Left ventricle myocardium superior (tissue), 1 donor: ENCODE measurements at regions of chrX and their contacts with region 1.

Region 1: GRCh38 chrX:68828740-68829552 is at the start of gene EFNB1:
- DNase-seq: peak; percentile 94
- ATAC-seq: peak; percentile 92
- total RNA-seq, gene EFNB1: 15.8 TPM

Region 2: DNA sequence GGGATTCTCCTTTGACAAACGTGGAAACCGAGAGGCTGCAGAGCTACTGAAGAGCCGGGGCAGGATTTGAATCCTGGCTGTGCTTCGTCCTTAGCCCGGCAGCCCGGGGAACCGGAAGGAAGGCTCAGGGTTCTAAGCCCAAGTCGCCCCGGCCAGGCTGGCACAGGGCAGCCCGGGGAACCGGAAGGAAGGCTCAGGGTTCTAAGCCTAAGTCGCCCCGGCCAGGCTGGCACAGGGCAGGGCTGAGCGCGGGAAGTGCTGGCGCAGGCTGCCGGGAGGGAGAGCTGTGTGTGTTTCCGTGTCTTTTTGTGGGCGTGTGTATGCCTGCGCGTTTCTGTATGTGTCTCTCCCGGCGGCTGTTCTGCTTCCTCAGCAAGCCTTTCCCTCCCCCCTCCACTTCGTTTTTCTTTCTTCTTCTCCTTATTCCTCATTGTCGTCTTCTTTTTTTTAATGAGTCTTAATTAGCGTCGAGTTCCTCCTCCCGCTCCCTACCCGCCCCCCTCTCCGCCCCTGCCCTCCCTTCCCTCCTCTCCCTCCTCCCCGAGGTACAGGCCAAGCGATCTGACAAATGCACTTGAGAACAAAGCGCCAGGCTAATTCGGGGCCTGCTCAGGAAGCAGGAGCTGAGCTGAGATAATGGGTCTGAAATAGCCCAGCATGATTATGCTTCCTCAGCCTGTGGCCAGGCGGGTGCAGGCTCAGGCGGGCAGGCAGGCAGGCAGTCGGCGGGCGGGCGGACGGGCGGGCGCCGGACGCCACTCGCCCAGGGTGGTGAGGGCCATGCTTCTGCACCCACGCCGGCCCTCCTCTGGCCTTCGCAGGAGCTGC is 65.8 kb after region 1 on chrX:
- intact Hi-C with region 1: loop called (anchors 10 kb)
- DNase-seq: peak; percentile 75
- ATAC-seq: peak; percentile 90

Region 3: DNA sequence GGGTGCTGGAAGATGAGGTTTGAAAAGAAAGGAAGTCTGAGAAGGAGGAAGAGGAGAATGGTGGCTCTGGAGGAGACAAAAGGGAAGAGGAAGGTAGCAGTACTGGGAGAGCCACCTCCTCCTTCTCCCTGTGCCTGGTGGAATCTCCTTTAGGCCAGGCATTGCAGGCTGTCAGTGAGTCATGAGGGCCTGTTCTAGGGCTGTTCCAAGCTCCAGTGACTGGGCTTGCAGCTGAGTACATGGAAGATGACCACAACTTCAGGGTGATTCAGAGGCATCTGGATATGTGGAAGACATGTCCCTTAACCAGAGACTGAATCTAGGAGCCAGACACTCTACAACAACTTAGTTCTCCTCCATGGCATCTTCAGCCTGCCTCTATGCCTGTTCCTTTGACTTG is 107.7 kb after region 1 on chrX:
- intact Hi-C with region 1: loop called (anchors 5 kb)
- DNase-seq: no peak
- ATAC-seq: no peak

Region 4: DNA sequence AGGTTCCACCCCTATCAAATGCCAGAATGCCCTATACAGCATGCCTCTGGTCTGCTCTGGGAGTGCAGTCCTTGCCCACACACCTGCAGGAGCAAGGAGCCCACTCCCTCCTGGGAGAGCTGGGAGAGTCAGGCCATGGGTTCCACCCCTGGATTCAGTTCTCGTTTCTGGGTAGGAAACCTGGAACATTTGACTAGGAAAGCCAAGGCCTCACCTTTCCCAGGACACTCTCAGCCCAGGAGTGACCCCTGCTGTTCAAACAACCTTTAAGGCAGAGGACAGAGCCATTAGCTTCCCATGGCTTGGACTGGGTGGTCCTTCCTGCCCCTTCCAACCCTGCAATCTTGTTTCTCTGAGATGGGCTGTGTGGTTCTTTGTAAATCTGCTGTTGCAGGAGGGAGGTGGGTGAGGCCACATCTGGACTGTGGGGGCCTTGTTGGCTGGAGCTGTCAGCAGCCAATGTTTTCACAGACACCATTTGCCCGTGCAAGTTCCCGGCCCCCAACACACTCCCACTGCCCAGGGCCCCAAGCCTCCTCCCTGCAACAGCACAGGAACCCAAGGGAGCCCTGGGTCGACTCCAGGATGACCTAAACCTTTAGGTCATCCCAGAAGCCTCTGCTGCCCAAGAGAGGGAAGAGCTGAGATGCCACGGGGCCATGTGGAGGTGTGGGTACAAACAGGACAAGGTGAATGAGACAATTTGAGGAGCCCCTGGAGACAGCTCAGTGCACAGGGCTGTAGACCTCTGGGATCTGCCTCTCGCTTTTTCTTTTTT is 231.9 kb after region 1 on chrX:
- intact Hi-C with region 1: loop called (anchors 5 kb)
- DNase-seq: no peak
- ATAC-seq: peak; percentile 88

Region 5: DNA sequence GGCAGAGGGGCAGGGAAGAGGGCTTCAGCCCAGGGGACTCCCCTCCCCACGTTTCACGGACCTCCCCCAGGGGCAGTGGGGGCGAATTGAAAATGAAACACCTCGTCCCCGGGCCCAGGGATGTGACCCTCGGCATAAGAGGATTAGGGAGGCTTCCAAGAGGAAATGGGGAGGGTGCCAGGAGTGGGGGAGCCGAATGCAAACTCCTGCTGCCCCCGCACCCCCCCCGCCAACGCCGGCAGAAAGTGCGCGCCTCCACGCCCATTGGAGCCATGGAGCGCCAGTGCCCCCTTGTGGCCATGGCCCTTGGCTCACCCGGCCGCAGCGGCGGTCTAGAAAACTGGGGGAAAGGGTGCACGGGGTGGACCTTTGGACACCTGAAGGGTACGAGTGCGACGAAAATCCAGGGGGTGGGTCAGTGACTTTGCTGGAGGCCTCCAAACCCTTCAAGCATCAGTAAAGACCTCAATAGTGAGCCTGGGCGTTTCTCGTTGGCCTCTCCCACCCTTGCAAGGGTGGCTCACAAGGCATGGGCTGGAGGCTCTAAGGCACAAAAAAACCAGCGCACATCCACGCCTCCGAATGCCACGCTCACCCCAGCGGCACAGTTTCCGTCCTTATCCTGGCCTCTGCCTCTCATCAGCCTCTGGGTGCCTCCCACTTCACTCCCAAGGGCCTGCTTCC is 457.1 kb after region 1 on chrX:
- intact Hi-C with region 1: loop called (anchors 10 kb)
- DNase-seq: peak; percentile 84
- ATAC-seq: peak; percentile 86

Region 6: GRCh38 chrX:69387567-69388487 is 558.9 kb after region 1 on chrX:
- intact Hi-C with region 1: loop called (anchors 10 kb)
- DNase-seq: peak; percentile 54
- ATAC-seq: peak; percentile 80